ENCODE measurements at regions of chr22 and their contacts with region 1.

Region 1: GRCh38 chr22:42090596-42091454 is at the start of gene NDUFA6:
- DNase-seq: peak; percentile 95 to 99 (median 97)
- ATAC-seq: peak; percentile 92
- H3K4me3 ChIP-seq: peak within 1 kb of the TSS; percentile 73 to 96
- H3K4me3 Mint-ChIP-seq: peak within 1 kb of the TSS; percentile 99
- H3K27ac ChIP-seq: peak within 1 kb of the TSS; percentile 94 to 95
- H3K27ac Mint-ChIP-seq: peak within 1 kb of the TSS; percentile 100
- H3K4me1 ChIP-seq: peaks cover 25% of the 10 kb centered on the region
- H3K4me1 Mint-ChIP-seq: peaks cover 43% of the 10 kb centered on the region
- H3K27me3 ChIP-seq: no peaks in the 10 kb centered on the region
- H3K27me3 Mint-ChIP-seq: no peaks in the 10 kb centered on the region
- CTCF ChIP-seq: peak; percentile 87
- total RNA-seq, gene NDUFA6: 55.5 to 59.7 TPM

Region 2: DNA sequence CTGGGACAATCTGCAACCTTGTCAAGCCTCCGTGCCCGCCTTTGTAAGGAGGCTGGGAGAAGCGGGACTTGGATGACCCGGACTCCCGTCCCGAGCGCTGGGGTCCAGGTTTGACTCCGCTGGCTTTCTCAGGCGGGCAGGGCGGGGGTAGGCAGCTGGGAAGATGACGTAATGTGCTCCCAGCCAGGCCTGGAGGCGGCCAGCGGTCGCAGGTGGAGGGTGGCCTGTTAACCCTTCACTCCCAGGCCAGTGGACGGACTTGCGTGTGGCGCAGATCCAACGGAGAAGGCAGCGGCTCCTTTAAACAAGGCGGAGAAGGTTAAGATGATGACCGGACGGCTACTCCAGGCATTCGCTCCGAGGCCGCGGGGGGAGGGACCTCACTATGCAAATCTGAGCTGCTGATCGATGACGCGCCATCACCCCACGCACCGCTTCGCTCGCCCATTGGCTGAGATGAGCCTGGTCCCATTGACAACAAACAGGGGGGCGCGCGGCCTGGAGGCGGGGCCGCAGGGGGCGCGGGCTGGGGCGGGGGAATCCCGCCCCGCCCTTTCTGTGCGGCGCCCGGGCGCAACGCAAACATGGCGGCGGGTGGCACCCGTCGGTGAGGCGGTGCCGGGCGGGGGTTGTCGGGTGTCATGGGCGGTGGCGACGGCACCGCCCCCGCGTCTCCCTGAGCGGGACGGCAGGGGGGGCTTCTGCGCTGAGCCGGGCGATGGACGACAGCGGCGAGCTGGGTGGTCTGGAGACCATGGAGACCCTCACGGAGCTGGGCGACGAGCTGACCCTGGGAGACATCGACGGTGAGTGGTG is 258.1 kb before region 1 on chr22 and contains the start of gene SREBF2:
- CTCF ChIA-PET with region 1: no interaction called
- POLR2A ChIA-PET with region 1: no interaction called
- intact Hi-C with region 1: loop called in 1 of 2 experiments (anchors 5 kb)
- DNase-seq: peak; percentile 97 to 100 (median 99)
- ATAC-seq: peak; percentile 94
- H3K4me3 ChIP-seq: peak within 1 kb of the TSS; percentile 76 to 84
- H3K4me3 Mint-ChIP-seq: peak within 1 kb of the TSS; percentile 97
- H3K27ac ChIP-seq: peak within 1 kb of the TSS; percentile 85 to 97
- H3K27ac Mint-ChIP-seq: peak within 1 kb of the TSS; percentile 100
- H3K4me1 ChIP-seq: peaks cover 15% of the 10 kb centered on the region
- H3K4me1 Mint-ChIP-seq: peaks cover 31% of the 10 kb centered on the region
- H3K27me3 ChIP-seq: no peaks in the 10 kb centered on the region
- H3K27me3 Mint-ChIP-seq: no peaks in the 10 kb centered on the region
- CTCF ChIP-seq: no peak
- total RNA-seq, gene SREBF2: 109 to 122 TPM

Region 3: DNA sequence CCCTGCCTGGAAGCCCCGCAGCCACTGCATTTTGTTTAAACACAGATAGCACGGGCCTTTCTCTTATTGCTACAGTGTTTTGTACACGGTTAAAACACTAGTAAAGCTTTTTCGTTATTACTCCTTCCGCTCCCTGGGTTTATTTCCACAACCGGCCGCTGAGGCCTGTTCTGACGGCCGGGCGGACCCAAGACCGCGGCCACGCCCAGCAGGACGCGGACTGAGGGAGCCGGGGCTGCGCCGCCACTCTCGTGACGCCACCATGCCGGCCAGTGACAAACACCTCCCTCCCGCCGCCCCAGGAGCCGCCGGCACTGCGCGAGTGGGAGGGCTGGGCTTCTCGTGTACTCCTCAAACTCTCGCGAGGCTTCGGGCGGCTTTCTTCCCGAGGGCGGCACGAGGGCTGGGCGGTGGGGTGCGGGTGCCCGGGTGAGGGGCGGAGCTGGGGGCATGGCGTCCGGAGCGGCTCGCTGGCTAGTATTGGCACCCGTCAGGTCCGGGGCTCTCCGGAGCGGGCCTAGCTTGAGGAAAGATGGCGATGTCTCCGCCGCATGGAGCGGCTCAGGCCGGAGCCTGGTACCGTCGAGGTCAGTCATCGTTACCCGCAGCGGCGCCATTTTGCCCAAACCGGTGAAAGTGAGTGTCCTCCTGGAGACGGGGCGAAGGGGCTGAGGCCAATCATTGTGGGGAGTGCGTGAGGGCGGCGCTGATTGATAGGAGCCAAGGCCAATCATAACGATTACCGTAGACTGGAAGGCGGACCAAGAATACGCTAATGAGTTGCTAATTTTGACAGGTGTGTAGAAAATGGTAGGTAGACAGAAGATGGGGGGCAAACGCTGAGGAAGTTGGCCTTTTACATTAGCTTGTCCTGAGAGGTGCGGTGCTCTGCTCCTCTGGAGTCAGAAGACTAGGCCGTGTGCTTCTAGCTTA is 11.2 kb before region 1 on chr22 and contains the start of gene SMDT1:
- CTCF ChIA-PET with region 1: interaction called, 6 read pairs
- POLR2A ChIA-PET with region 1: interaction called, 83 read pairs
- intact Hi-C with region 1: loop called (anchors 1 kb)
- DNase-seq: peak; percentile 95 to 99 (median 98)
- ATAC-seq: peak; percentile 92
- H3K4me3 ChIP-seq: peak within 1 kb of the TSS; percentile 79 to 80
- H3K4me3 Mint-ChIP-seq: peak within 1 kb of the TSS; percentile 93
- H3K27ac ChIP-seq: peak within 1 kb of the TSS; percentile 89 to 97
- H3K27ac Mint-ChIP-seq: peak within 1 kb of the TSS; percentile 98
- H3K4me1 ChIP-seq: peaks cover 21% of the 10 kb centered on the region
- H3K4me1 Mint-ChIP-seq: peaks cover 36% of the 10 kb centered on the region
- H3K27me3 ChIP-seq: no peaks in the 10 kb centered on the region
- H3K27me3 Mint-ChIP-seq: no peaks in the 10 kb centered on the region
- CTCF ChIP-seq: no peak
- total RNA-seq, gene SMDT1: 30.4 to 34.5 TPM

Region 4: DNA sequence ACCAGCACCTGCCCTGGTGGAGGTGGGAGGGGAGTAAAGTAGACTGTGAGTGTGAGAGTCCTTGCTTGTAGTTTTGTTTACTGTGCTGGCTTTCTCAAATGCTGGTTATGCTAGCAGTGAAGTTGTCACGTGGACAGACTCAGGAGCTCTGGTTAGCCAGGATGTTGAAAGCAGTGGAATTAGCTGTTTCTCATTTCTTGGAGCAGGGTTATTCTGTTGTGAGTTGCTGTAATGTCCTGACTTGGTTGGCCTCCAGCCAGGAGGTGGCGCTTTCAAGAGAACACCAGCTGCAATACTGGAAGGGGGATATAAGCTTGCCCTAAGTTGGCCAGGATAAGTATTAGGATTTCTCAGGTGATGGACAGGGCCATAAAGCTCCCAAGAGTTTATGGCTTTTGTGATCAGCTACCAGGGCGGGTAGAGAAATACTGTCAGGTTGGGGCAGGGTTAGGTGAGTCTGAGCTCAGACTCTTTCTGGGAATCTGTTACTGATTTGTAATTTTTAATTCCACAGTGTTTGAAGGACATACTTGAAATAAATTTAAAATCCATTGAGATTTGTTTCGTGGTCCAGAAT is 26.1 kb after region 1 on chr22:
- CTCF ChIA-PET with region 1: interaction called, 16 read pairs
- POLR2A ChIA-PET with region 1: interaction called, 4 read pairs
- intact Hi-C with region 1: loop called in 1 of 2 experiments (anchors 2 kb)
- DNase-seq: no peak
- ATAC-seq: no peak
- H3K4me3 ChIP-seq: no peak overlapping the region
- H3K4me3 Mint-ChIP-seq: no peak overlapping the region
- H3K27ac ChIP-seq: no peak overlapping the region
- H3K27ac Mint-ChIP-seq: no peak overlapping the region
- H3K4me1 ChIP-seq: peaks cover 19% of the 10 kb centered on the region
- H3K4me1 Mint-ChIP-seq: peaks cover 31% of the 10 kb centered on the region
- H3K27me3 ChIP-seq: no peaks in the 10 kb centered on the region
- H3K27me3 Mint-ChIP-seq: no peaks in the 10 kb centered on the region
- CTCF ChIP-seq: no peak

Region 5: GRCh38 chr22:42313804-42314581 is 223.2 kb after region 1 on chr22:
- CTCF ChIA-PET with region 1: no interaction called
- POLR2A ChIA-PET with region 1: no interaction called
- intact Hi-C with region 1: loop called in 1 of 2 experiments (anchors 10 kb)
- DNase-seq: peak in 6 of 9 experiments; percentile 33 to 71 (median 44)
- ATAC-seq: peak; percentile 50
- H3K4me3 ChIP-seq: no peak overlapping the region
- H3K4me3 Mint-ChIP-seq: no peak overlapping the region
- H3K27ac ChIP-seq: peak overlapping the region in 1 of 2 experiments; percentile 50
- H3K27ac Mint-ChIP-seq: no peak overlapping the region
- H3K4me1 ChIP-seq: peaks cover 85% of the 10 kb centered on the region
- H3K4me1 Mint-ChIP-seq: peaks cover 45% of the 10 kb centered on the region
- H3K27me3 ChIP-seq: no peaks in the 10 kb centered on the region
- H3K27me3 Mint-ChIP-seq: no peaks in the 10 kb centered on the region
- CTCF ChIP-seq: peak; percentile 32

Region 6: DNA sequence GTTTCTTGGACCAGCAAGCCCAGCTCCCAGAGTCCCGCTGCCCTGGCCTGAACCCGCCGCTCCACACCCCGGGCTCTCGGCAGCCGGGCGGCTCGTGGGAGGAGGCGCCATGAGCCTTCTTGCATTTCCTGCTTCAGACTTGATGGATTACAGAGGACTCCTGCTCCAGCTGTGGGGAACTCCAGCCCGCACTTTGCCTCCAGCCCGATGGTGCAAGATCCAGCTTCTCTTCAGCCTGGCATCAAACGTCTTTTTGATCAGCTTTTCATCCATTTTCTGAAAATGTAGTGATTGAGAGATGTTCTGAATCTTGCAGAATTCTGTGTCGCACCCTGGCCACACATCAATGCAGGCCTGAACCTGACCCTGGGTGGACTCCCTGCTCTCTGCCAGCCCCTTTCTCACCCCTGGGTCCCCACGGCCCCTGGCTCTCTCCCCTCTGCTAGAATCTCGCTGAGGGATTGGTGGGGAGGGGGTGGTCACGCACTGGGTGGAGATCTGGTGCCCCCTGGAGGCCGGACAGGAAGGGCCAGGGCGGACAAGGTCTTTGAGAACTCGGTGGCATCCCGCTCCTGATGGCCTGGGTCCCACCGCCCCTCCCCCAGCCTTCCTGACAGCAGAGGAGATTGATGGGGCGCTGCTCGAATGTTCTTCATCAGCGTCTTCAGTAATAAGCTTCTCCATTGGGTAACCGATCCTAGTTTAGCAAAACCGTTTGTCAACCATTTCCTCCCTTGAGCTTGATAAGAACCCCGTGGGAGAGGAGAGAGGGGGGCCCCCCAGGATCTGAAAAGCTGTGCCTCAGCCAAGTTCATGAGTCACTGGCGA is 353.5 kb after region 1 on chr22:
- CTCF ChIA-PET with region 1: interaction called, 39 read pairs
- POLR2A ChIA-PET with region 1: interaction called, 16 read pairs
- intact Hi-C with region 1: loop called (anchors 2 kb)
- DNase-seq: peak; percentile 58 to 91 (median 78)
- ATAC-seq: peak; percentile 95
- H3K4me3 ChIP-seq: peak overlapping the region; percentile 45 to 47
- H3K4me3 Mint-ChIP-seq: peak overlapping the region; percentile 81
- H3K27ac ChIP-seq: peak overlapping the region; percentile 38 to 58
- H3K27ac Mint-ChIP-seq: peak overlapping the region; percentile 92
- H3K4me1 ChIP-seq: peaks cover 11% of the 10 kb centered on the region
- H3K4me1 Mint-ChIP-seq: peaks cover 22% of the 10 kb centered on the region
- H3K27me3 ChIP-seq: no peaks in the 10 kb centered on the region
- H3K27me3 Mint-ChIP-seq: no peaks in the 10 kb centered on the region
- CTCF ChIP-seq: peak; percentile 36